ENCODE measurements at regions of chr10 and their contacts with region 1.

Region 1: GRCh38 chr10:17454161-17455014 is at the start of gene ST8SIA6:
- DNase-seq: no peak
- H3K4me3 ChIP-seq: peak within 1 kb of the TSS; percentile 38 to 89 (median 62)
- H3K27ac ChIP-seq: peak within 1 kb of the TSS; percentile 84 to 92
- H3K4me1 ChIP-seq: peaks cover 0 to 5% of the 10 kb centered on the region in 2 donors
- H3K27me3 ChIP-seq: peaks cover 0 to 2% of the 10 kb centered on the region in 2 donors
- CTCF ChIP-seq: no peak
- POLR2A ChIP-seq: no peak
- total RNA-seq, gene ST8SIA6: 1.3 to 32.1 (median 18.4) TPM

Region 2: GRCh38 chr10:16828114-16828568 is 626.2 kb before region 1 on chr10:
- intact Hi-C with region 1: no loop called
- DNase-seq: no peak
- H3K4me3 ChIP-seq: no peak overlapping the region
- H3K27ac ChIP-seq: no peak overlapping the region
- H3K4me1 ChIP-seq: no peaks in the 10 kb centered on the region
- H3K27me3 ChIP-seq: no peaks in the 10 kb centered on the region
- CTCF ChIP-seq: peak; percentile 38 to 75 (median 41)
- POLR2A ChIP-seq: no peak

Region 3: DNA sequence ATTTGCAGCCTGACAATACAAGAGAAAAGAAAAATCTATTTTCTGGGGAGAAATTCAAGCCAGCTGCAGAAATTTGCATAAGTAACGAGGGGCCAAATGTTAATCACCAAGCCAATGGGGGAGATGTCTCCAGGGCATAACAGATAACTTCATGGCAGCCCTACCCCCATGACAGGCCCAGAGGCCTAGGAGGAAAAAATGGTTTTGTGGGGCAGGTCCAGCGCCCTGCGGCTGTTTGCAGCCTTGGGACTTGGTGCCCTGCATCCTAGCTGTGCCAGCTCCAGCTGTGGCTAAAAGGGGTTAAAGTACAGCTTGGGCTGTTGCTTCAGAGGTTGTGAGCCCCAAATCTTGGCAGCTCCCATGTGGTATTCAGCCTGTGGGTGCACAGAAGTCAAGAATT is 172.1 kb before region 1 on chr10:
- intact Hi-C with region 1: loop called (anchors 5 kb)
- DNase-seq: no peak
- H3K4me3 ChIP-seq: no peak overlapping the region
- H3K27ac ChIP-seq: no peak overlapping the region
- H3K4me1 ChIP-seq: no peaks in the 10 kb centered on the region
- H3K27me3 ChIP-seq: no peaks in the 10 kb centered on the region
- CTCF ChIP-seq: no peak
- POLR2A ChIP-seq: no peak

Region 4: DNA sequence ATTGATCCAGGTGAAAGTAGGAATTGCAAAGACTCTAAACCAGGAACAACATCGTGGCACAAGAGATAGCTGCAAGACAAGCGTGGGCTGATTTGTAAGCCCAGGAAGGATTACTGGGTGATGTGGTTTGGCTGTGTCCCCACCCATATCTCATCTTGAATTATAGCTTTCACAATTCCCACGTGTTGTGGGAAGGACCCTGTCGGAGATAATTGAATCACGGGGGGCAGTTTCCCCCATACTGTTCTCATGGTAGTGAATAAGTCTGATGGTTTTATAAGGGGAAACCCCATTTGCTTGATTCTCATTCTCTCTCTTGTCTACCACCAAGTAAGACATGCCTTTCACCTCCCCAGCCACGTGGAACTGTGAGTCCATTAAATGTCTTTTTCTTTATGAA is 59.5 kb before region 1 on chr10:
- intact Hi-C with region 1: no loop called
- DNase-seq: no peak
- H3K4me3 ChIP-seq: no peak overlapping the region
- H3K27ac ChIP-seq: no peak overlapping the region
- H3K4me1 ChIP-seq: no peaks in the 10 kb centered on the region
- H3K27me3 ChIP-seq: no peaks in the 10 kb centered on the region
- CTCF ChIP-seq: no peak
- POLR2A ChIP-seq: no peak

Region 5: DNA sequence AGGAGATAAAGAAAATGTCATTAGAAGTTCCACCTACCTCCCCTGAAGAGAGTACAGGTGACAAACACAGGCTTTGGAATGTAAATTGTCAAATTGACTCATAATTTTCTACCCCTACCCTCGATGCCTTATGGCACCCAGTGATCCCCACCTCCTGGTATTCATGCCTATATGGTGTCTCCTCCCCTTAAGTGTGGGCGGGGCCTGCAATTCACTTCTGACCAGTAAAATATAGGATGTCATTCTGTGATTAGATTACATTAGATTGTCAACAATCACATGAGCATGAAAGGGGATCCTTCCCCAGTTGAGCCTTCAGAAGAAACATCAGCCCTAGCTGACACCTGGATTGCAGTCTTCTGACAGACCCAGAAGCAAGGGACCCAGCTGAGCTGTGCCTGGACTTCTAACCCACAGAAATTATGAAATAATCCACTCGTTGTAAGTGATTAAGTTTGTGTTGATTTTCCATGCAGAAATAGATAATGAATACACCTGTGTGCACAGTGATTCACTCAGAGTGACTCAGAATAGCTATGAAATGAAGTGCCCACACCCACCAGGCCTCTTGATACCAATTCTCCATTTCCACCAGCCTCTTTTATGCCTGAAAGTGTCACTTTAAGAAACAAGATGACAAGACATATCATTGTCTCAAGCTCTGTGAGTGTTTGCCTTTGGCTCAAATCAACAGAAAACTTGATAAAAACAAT is 488.8 kb after region 1 on chr10:
- intact Hi-C with region 1: no loop called
- DNase-seq: no peak
- H3K4me3 ChIP-seq: no peak overlapping the region
- H3K27ac ChIP-seq: no peak overlapping the region
- H3K4me1 ChIP-seq: no peaks in the 10 kb centered on the region
- H3K27me3 ChIP-seq: no peaks in the 10 kb centered on the region
- CTCF ChIP-seq: no peak
- POLR2A ChIP-seq: no peak